OCI-LY7 (cell line): ENCODE measurements at regions of chr5 and their contacts with region 1.

Region 1: GRCh38 chr5:140042643-140043500 is at the start of gene NRG2:
- DNase-seq: peak; percentile 59
- H3K4me3 ChIP-seq: peak within 1 kb of the TSS; percentile 64
- H3K27ac ChIP-seq: no peak within 1 kb of the TSS
- H3K4me1 ChIP-seq: peaks cover 12% of the 10 kb centered on the region
- CTCF ChIP-seq: peak; percentile 67
- total RNA-seq, gene NRG2: 0.15 and 1.7 TPM in 2 replicates

Region 2: DNA sequence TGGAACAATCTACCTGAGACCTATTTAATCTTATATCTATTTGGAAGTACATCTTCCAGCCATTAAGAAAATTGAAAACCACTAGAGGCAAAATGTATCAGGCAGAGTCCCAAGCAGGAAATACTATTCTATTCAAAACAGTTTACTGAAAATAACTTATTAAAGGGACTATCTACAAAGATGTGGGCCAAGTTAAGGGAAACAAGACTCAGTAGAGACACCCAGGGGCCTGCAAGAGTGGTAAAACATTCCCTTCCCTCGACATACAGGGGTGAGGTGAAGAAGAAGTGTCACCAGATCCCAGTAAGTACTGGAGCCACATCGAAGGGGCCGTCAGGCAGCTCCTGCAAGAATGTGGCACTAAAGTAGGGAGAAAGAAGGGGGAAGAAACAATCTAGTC is 12.3 kb after region 1 on chr5:
- CTCF ChIA-PET with region 1: interaction called, 3 read pairs
- POLR2A ChIA-PET with region 1: interaction called, 15 read pairs
- intact Hi-C with region 1: no loop called
- DNase-seq: no peak
- H3K4me3 ChIP-seq: no peak overlapping the region
- H3K27ac ChIP-seq: no peak overlapping the region
- H3K4me1 ChIP-seq: no peaks in the 10 kb centered on the region
- CTCF ChIP-seq: no peak